ENCODE measurements at regions of chr17 and their contacts with region 1.

Region 1: DNA sequence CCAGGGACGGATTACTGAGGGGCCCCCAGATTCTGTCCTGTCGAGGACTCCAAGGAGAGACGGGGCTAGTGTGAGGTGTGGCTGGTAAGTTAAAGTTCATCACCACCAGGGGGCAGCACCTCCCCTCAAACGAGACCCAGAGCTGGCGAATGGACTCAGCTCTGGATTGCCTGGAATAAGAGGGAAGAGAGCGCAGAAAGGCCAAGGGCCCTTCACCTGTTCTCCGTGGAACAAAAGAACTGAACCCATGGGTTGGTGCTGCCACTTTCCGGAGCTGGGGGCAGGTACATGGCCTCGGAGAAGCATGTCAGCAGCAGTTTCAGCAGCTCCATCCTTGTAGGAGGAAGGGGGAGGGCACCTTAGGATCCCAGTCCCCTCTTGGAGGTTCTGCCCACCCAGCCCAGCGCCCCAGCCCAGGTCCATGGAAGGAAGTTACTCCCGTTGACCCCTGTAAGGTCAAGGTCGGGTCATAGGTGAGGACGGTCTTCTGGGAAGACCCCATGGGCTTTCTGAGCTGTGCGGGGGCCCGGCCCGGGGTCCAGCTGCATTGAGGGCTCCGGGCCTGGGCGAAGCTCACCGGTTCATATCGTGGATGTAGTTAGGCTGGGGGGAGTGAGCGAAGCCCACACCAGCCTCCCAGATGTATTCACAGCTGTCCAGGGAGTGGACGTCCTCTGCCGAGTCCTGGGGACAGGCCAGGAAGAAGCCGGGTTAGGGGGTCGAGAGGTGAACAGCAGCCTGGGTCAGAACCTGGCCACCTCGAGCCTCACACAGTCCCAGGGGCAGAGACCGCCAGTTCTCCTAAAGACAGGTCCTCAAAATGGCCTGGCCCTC is 10.7 kb downstream of the HID1 start:
- DNase-seq: peak; percentile 90
- H3K4me3 Mint-ChIP-seq: no peak overlapping the region
- H3K27ac Mint-ChIP-seq: no peak overlapping the region
- H3K4me1 Mint-ChIP-seq: peaks cover 9% of the 10 kb centered on the region
- H3K27me3 Mint-ChIP-seq: no peaks in the 10 kb centered on the region

Region 2: GRCh38 chr17:74935585-74936469 is 26.0 kb before region 1 on chr17 and contains the start of gene OTOP3:
- CTCF ChIA-PET with region 1: interaction called, 10 read pairs
- POLR2A ChIA-PET with region 1: no interaction called
- intact Hi-C with region 1: no loop called
- DNase-seq: no peak
- H3K4me3 Mint-ChIP-seq: no peak within 1 kb of the TSS
- H3K27ac Mint-ChIP-seq: no peak within 1 kb of the TSS
- H3K4me1 Mint-ChIP-seq: no peaks in the 10 kb centered on the region
- H3K27me3 Mint-ChIP-seq: peaks cover 48% of the 10 kb centered on the region
- total RNA-seq, gene OTOP3: not detected

Region 3: DNA sequence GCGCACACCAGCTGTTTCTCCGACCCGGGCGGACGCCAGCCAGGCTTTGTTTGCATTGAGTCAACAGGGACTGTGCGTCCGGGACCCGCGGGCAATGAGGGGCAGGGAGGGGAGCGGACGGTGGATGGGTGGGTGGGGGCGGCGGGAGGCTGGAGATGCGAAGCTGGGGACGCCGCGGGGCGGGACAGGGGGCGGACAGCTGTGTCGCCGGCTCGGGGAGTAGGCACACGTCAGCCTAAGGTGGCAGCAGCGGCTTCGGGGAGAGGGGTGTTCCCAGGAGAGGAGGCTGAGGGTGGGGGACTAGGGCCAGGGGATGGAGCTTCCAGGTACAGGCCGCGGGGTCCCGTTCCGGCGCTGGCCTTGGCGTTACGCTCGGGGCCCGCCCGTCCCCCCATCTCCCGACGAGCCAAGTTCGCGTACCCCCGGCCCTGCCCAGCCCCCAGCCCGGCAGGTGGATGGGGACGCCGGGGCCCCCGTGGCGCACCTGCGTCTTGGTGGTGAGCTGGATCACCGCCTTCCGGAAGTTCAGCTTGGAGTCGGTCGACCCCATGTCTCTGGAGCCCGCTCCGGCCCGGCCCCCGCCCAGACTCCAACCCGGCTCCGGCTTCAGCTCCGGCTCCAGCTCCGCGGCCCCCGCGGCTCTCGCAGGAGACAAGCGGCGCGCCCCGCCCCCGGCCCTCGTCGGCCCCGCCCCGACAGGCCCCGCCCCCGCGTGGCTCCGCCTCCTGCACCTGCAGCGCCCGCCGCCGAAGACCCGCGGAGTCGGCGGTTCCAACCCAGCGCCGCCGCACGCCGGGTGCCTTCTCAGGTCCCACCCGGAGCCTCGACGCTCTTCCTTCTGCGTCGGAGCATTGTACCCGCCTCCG is 10.5 kb after region 1 on chr17 and contains the start of gene HID1:
- CTCF ChIA-PET with region 1: interaction called, 69 read pairs
- POLR2A ChIA-PET with region 1: interaction called, 3 read pairs
- intact Hi-C with region 1: no loop called
- DNase-seq: peak; percentile 82
- H3K4me3 Mint-ChIP-seq: peak within 1 kb of the TSS; percentile 73
- H3K27ac Mint-ChIP-seq: no peak within 1 kb of the TSS
- H3K4me1 Mint-ChIP-seq: peaks cover 5% of the 10 kb centered on the region
- H3K27me3 Mint-ChIP-seq: peaks cover 10% of the 10 kb centered on the region
- total RNA-seq, gene HID1: 2.3 to 2.6 TPM

Region 4: GRCh38 chr17:75006653-75007052 is 44.8 kb after region 1 on chr17:
- CTCF ChIA-PET with region 1: interaction called, 86 read pairs
- POLR2A ChIA-PET with region 1: interaction called, 3 read pairs
- intact Hi-C with region 1: loop called (anchors 5 kb)
- DNase-seq: no peak
- H3K4me3 Mint-ChIP-seq: no peak overlapping the region
- H3K27ac Mint-ChIP-seq: no peak overlapping the region
- H3K4me1 Mint-ChIP-seq: peaks cover 6% of the 10 kb centered on the region
- H3K27me3 Mint-ChIP-seq: no peaks in the 10 kb centered on the region

Region 5: DNA sequence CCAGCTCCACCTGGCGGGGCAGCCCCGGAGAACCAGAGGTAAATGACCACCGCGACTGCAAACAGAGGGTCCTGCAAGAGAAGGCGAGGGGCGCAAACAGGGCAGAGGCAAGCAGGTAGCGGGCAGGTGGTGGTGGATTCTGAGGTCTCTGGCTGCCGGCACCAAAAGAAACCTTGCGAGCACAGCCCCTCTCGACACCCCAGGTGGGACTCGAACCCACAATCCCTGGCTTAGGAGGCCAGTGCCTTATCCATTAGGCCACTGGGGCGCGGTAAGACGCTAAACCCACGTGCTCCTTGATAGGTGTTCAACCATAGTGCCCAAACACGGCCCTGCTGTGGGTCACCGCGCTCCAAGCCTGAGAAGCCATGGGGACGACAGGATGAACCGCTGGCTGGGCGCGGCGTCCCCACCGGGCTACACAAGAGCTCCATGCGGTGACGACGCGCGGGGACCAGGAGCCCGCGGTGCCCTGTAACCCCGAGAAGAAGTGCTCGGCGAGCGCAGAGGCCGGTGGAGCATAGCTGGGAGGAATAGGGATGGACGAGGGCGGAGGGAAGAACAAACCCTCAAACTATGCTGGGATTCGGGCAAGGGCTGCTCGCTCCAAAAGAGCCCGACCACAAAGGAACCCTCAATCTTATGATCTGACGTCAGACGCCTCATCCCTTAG is 72.5 kb after region 1 on chr17:
- CTCF ChIA-PET with region 1: interaction called, 16 read pairs
- POLR2A ChIA-PET with region 1: interaction called, 4 read pairs
- intact Hi-C with region 1: no loop called
- DNase-seq: peak; percentile 95
- H3K4me3 Mint-ChIP-seq: peak overlapping the region; percentile 97
- H3K27ac Mint-ChIP-seq: peak overlapping the region; percentile 96
- H3K4me1 Mint-ChIP-seq: peaks cover 49% of the 10 kb centered on the region
- H3K27me3 Mint-ChIP-seq: peaks cover 4% of the 10 kb centered on the region

Region 6: GRCh38 chr17:75182569-75183450 is 220.9 kb after region 1 on chr17 and contains the start of gene SUMO2:
- CTCF ChIA-PET with region 1: interaction called, 3 read pairs
- POLR2A ChIA-PET with region 1: no interaction called
- intact Hi-C with region 1: loop called (anchors 5 kb)
- DNase-seq: peak; percentile 97
- H3K4me3 Mint-ChIP-seq: peak within 1 kb of the TSS; percentile 91
- H3K27ac Mint-ChIP-seq: peak within 1 kb of the TSS; percentile 97
- H3K4me1 Mint-ChIP-seq: peaks cover 30% of the 10 kb centered on the region
- H3K27me3 Mint-ChIP-seq: no peaks in the 10 kb centered on the region
- total RNA-seq, gene SUMO2: 610 to 612 TPM

Region 7: GRCh38 chr17:75412455-75413317 is 450.8 kb after region 1 on chr17:
- CTCF ChIA-PET with region 1: interaction called, 13 read pairs
- POLR2A ChIA-PET with region 1: no interaction called
- intact Hi-C with region 1: no loop called
- DNase-seq: peak; percentile 86
- H3K4me3 Mint-ChIP-seq: peak overlapping the region; percentile 49
- H3K27ac Mint-ChIP-seq: peak overlapping the region; percentile 19
- H3K4me1 Mint-ChIP-seq: peaks cover 16% of the 10 kb centered on the region
- H3K27me3 Mint-ChIP-seq: peaks cover 1% of the 10 kb centered on the region